AG04449 (cell line): ENCODE measurements at regions of chr2 and their contacts with region 1.

Region 1: GRCh38 chr2:19362755-19363473 is 4.5 kb upstream of the OSR1 start:
- DNase-seq: no peak
- H3K4me3 ChIP-seq: peak overlapping the region; percentile 73
- CTCF ChIP-seq: peak; percentile 77

Region 2: GRCh38 chr2:18749912-18750526 is 612.9 kb before region 1 on chr2:
- CTCF ChIA-PET with region 1: interaction called, 21 read pairs
- POLR2A ChIA-PET with region 1: no interaction called
- DNase-seq: no peak
- H3K4me3 ChIP-seq: no peak overlapping the region
- CTCF ChIP-seq: peak; percentile 59

Region 3: DNA sequence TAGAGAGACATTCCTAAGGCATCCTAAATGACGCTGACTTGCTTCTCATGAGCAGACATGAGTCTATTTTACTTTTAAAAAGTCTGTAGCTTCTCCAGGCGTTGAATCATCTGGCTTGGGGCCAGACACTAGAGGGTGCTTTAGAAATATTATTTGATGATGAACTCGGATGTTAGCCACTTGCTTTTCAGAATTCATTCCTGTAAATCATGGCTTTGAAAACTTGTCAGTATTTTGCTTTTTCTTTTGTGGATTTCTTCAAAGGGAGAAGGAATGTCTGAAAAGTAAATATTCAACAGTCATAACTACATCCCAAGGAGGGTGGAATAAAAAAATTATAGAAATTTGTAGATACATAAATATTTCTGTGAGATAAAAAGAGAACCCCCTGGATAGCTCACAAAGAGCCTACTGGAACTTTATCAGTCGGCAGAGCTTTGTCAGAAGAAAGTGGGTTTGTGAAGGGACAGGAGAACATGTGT is 375.3 kb before region 1 on chr2:
- CTCF ChIA-PET with region 1: no interaction called
- POLR2A ChIA-PET with region 1: interaction called, 10 read pairs
- DNase-seq: peak; percentile 82
- H3K4me3 ChIP-seq: no peak overlapping the region
- CTCF ChIP-seq: peak; percentile 12

Region 4: DNA sequence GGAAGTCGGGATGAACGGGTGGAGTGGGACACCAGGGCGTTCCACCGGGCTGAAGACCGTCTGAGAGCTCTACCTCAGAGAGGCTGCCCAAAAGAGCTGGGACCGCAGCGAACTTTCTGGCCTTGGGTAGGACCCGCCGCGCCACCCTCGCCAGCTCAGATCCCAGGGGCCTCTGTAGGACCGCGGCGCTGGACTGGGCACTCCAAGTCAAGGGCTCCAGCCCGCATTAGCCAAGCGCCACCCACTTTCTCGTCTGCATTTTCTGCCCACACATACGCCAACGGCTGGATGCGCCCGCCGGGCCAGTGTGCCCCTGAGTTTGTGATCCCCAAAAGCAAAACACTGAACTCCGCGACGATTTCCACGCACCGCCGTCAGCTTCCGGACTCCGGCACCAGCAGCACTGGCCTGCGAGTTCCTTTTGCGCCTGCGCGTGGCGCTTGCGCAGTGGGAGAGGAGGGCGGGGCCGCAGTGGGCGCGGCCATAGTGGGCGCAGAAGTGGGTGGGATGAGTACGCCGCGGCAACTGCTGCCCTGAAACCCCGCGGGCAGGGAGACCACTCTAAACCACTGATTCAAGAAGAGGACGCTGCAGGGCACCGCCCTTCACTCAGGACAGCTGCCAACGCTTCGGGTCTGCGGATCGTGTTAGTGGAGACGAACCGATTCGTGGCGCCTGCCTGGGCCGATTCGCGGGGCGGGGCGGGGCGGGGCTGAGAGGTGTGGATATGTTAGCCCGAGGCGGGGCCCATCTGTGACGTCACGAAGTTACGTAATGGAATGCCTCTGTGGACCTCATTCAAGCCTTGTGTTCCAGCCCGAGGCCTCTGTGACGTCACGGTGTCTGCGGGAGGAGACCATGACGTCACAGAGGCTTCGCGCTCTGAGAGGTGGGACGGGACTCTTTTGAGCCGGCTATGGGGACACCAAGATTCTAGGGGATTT is 15.0 kb before region 1 on chr2:
- CTCF ChIA-PET with region 1: interaction called, 5 read pairs
- POLR2A ChIA-PET with region 1: interaction called, 20 read pairs
- DNase-seq: peak; percentile 82
- H3K4me3 ChIP-seq: peak overlapping the region; percentile 87
- CTCF ChIP-seq: no peak

Region 5: DNA sequence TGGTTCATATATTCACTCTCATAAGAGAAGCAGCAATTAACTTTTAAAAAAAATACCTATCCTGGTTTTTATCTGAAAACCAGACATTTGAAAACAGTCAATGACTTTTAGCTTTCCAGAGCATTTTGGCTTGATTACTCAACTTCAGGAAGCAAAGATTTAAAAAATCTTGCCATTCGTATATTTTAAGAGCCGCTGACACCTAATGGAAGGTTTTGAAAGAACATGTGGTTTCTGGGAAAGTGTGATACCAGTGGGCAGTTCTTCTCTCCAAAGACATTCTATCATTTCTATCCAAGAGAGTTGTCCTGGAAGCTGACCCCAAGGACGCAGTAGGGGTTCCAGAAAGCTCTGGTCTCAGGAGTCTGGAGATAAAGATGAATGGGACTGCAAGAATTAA is 304.2 kb after region 1 on chr2:
- CTCF ChIA-PET with region 1: interaction called, 104 read pairs
- POLR2A ChIA-PET with region 1: no interaction called
- DNase-seq: no peak
- H3K4me3 ChIP-seq: no peak overlapping the region
- CTCF ChIP-seq: peak; percentile 38